ENCODE measurements at regions of chr7 and their contacts with region 1.

Region 1: DNA sequence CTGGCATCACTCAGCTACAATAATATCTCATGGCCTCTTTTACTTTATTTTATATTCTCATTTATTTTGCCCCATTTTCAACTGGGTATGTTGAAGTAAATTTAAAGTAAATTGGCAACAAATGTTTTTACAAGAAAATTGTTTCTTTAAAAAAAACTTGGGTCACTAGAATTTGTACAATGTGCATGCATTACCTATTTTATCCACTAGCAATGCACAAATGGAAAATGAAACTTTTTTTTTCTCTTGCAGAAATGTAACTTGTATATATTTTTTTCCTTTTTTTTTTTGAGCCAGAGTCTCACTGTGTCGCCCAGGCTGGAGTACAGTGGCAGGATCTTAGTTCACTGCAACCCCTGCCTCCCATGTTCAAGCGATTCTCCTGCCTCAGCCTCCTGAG is 10.3 kb upstream of the H2AZ2 start:
- DNase-seq: no peak
- CTCF ChIP-seq: no peak

Region 2: DNA sequence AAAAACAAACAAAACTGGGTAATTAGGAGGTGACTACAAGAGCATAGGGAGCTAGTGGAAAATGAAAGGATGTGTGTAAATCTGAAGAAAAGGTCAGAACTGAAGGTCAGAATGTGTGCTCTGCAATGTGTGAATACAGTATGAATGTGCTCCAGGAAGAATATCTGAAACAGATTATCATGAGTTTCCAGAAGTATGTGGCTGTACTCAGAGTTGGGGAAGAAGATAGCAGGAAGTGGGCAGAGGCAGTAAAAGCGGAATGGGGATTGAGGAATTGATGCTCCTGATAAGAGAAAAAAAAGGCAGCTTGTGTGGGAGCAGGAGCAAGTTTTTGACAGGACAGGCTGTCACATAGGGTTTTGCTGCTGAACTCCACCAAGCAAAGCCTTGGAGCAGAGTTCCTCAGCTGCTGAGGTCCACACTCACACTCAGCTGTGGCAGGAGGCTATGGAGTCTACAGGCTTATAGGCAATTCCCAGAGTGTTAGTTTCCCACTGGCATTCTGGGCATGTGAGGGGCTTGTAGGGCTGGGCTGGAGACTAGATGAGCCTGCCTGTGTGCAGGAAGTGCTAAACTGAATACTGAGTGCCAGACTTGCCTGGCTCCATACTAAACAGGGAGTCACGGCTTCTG is 33.2 kb before region 1 on chr7:
- CTCF ChIA-PET with region 1: interaction called, 10 read pairs
- POLR2A ChIA-PET with region 1: no interaction called
- DNase-seq: no peak
- CTCF ChIP-seq: no peak

Region 3: DNA sequence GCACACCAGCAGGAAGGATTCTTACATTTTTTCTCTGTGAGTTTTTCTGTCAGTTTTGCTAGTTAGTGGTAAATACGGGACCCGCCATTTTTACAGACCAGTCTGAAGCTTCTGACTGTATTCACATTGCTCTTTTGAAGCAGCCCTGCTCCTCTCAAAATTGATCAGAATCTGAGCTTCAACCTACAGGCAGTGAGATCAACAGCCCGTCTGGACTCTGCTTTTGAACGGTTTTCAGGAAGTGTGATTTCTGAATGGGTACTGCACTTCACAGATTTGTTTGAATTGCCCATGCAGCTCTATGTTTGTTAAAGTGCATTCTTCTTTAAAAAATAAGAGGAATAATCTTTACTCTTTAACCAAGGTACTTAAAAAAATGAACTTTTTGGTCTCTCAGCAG is 18.2 kb after region 1 on chr7:
- CTCF ChIA-PET with region 1: interaction called, 35 read pairs
- POLR2A ChIA-PET with region 1: no interaction called
- DNase-seq: no peak
- CTCF ChIP-seq: no peak

Region 4: GRCh38 chr7:44885394-44886317 is 27.5 kb after region 1 on chr7 and contains the start of gene PURB:
- CTCF ChIA-PET with region 1: interaction called, 35 read pairs
- POLR2A ChIA-PET with region 1: no interaction called
- DNase-seq: peak; percentile 96
- CTCF ChIP-seq: no peak